HEK293T (cell line): ENCODE measurements at regions of chr1 and their contacts with region 1.

Region 1: GRCh38 chr1:153727463-153728304 is at the start of gene INTS3:
- DNase-seq: peak; percentile 100

Region 2: DNA sequence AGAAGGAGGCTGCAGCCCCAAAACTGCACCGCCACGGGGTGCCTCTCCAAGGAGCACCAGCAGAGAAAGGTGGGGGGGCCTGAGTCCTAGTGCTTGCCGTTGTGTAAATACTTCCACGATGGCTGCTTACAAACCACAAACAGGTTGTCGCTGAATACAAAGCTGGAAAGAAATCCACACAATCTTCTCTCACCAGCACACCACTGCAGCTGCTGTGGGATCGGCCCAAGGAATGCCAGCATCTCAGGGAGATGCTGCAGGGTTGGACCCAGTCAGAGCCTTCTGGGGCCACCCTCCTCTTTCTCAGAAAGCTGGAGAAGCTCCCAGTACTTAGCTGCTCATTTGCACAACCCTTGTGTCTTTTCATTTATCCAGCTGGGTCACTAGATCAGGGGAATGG is 108.5 kb before region 1 on chr1:
- CTCF ChIA-PET with region 1: no interaction called
- POLR2A ChIA-PET with region 1: no interaction called
- DNase-seq: no peak

Region 3: GRCh38 chr1:153670859-153671627 is 56.6 kb before region 1 on chr1 and contains the start of gene ILF2:
- CTCF ChIA-PET with region 1: no interaction called
- POLR2A ChIA-PET with region 1: interaction called, 10 read pairs
- DNase-seq: peak; percentile 99

Region 4: GRCh38 chr1:153698020-153698931 is 29.4 kb before region 1 on chr1:
- CTCF ChIA-PET with region 1: no interaction called
- POLR2A ChIA-PET with region 1: interaction called, 24 read pairs
- DNase-seq: no peak

Region 5: GRCh38 chr1:153816283-153816889 is 88.7 kb after region 1 on chr1:
- CTCF ChIA-PET with region 1: no interaction called
- POLR2A ChIA-PET with region 1: no interaction called
- DNase-seq: no peak

Region 6: GRCh38 chr1:153860285-153860684 is 132.6 kb after region 1 on chr1:
- CTCF ChIA-PET with region 1: no interaction called
- POLR2A ChIA-PET with region 1: no interaction called
- DNase-seq: no peak